ENCODE measurements at regions of chr12 and their contacts with region 1.

Region 1: DNA sequence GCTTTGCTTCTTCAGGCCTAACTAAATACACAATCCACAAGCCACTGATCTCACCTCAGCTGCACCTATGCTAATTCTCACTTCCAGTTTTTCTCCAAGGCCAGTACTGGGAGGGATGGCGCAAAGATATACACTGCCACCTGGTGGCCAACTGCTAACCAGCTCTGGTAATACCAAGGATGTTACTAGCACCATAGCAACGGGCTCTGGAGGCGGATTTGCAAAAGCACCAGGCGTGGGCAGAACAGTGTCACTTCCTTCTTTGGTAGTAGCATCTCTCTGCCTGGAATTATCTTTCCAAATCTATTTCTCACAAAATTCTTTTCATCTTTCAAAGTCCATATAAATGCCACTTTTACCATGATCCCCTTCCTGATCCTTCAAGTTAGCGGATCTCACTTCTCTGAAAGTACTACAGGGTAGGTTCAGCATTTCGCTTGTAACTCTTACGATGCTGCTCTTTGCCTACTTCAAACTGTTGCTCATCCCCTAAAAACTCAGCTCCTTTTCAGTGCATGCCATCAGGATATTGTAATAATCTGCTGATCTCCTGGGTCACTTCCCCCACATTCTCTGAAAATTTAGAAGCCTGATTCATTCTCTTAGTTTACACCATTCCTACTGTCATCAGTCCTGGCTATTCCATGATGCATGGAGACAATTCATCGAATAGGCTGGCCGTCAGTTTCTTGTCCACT is 37.1 kb upstream of the FOXJ2 start:
- DNase-seq: peak; percentile 57 to 79 (median 62)
- ATAC-seq: peak; percentile 97 to 99 (median 99)
- H3K4me3 ChIP-seq: no peak overlapping the region
- H3K27ac ChIP-seq: no peak overlapping the region
- H3K4me1 ChIP-seq: no peaks in the 10 kb centered on the region
- H3K27me3 ChIP-seq: no peaks in the 10 kb centered on the region
- CTCF ChIP-seq: peak; percentile 72 to 76 (median 74)

Region 2: GRCh38 chr12:7695237-7696197 is 299.9 kb before region 1 on chr12 and contains the start of gene GDF3:
- intact Hi-C with region 1: no loop called
- DNase-seq: peak in 1 of 6 donors; percentile 12
- ATAC-seq: peak in 1 of 4 donors; percentile 43
- H3K4me3 ChIP-seq: no peak within 1 kb of the TSS
- H3K27ac ChIP-seq: no peak within 1 kb of the TSS
- H3K4me1 ChIP-seq: no peaks in the 10 kb centered on the region
- H3K27me3 ChIP-seq: no peaks in the 10 kb centered on the region
- CTCF ChIP-seq: no peak
- total RNA-seq, gene GDF3: not detected

Region 3: DNA sequence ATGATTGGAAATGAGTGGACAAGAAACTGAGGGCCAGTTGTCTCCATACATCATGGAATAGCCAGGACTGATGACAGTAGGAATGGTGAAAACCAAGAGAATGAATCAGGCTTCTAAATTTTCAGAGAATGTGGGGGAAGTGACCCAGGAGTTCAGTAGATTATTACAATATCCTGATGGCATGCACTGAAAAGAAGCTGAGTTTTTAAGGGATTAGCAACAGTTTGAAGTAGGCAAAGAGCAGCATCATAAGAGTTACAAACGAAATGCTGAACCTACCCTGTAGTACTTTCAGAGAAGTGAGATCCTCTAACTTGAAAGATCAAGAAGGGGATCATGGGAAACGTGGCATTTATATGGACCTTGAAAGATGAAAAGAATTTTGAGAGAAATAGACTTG is 135.9 kb before region 1 on chr12:
- intact Hi-C with region 1: loop called in 2 of 3 experiments (anchors 5 to 10 kb)
- DNase-seq: no peak
- ATAC-seq: no peak
- H3K4me3 ChIP-seq: no peak overlapping the region
- H3K27ac ChIP-seq: no peak overlapping the region
- H3K4me1 ChIP-seq: no peaks in the 10 kb centered on the region
- H3K27me3 ChIP-seq: no peaks in the 10 kb centered on the region
- CTCF ChIP-seq: no peak

Region 4: GRCh38 chr12:7933255-7933729 is 62.1 kb before region 1 on chr12:
- intact Hi-C with region 1: loop called in 1 of 3 experiments (anchors 5 kb)
- DNase-seq: peak in 3 of 6 donors; percentile 39 to 57 (median 53)
- ATAC-seq: peak; percentile 67 to 90 (median 79)
- H3K4me3 ChIP-seq: peak overlapping the region in 1 of 4 donors; percentile 45
- H3K27ac ChIP-seq: no peak overlapping the region
- H3K4me1 ChIP-seq: no peaks in the 10 kb centered on the region
- H3K27me3 ChIP-seq: no peaks in the 10 kb centered on the region
- CTCF ChIP-seq: peak in 2 of 4 donors; percentile 32 to 33

Region 5: DNA sequence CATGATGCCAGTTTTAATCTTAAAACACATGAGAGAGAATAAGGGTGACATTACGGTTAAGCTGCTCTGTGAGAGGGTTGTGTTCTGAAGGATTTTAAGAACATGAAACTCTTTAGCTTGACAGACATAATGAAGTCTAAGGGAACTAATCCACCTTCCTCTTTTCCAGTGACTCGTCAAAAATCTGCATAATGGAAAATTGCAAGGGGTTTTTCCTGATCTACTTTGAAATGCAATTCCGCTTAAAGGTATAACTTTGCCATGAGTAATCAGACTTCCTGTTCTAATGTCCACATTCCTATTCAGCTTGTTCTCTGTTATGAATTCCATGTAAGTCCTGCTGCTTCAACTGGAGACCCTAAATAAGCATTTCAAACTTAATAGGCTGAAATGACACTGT is 161.4 kb after region 1 on chr12 and contains the start of gene ZNF705A:
- intact Hi-C with region 1: no loop called
- DNase-seq: no peak
- ATAC-seq: peak in 2 of 4 donors; percentile 17 to 22
- H3K4me3 ChIP-seq: no peak within 1 kb of the TSS
- H3K27ac ChIP-seq: peak within 1 kb of the TSS in 1 of 4 donors; percentile 42
- H3K4me1 ChIP-seq: peaks cover 0 to 3% (median 0%) of the 10 kb centered on the region in 3 donors
- H3K27me3 ChIP-seq: no peaks in the 10 kb centered on the region
- CTCF ChIP-seq: no peak
- total RNA-seq, gene ZNF705A: not detected